Activated CD4-positive, alpha-beta T cell treated with anti-CD3 and anti-CD28 coated beads for 36 hours (primary cell): ENCODE measurements at regions of chr1 and their contacts with region 1.

Region 1: GRCh38 chr1:204363335-204364124 is 3.8 kb upstream of the PLEKHA6 start:
- DNase-seq: peak; percentile 87
- ATAC-seq: peak; percentile 81
- H3K4me3 Mint-ChIP-seq: peak overlapping the region; percentile 60
- H3K27ac Mint-ChIP-seq: peak overlapping the region; percentile 85
- H3K4me1 Mint-ChIP-seq: peaks cover 33% of the 10 kb centered on the region
- H3K27me3 Mint-ChIP-seq: peaks cover 2% of the 10 kb centered on the region

Region 2: DNA sequence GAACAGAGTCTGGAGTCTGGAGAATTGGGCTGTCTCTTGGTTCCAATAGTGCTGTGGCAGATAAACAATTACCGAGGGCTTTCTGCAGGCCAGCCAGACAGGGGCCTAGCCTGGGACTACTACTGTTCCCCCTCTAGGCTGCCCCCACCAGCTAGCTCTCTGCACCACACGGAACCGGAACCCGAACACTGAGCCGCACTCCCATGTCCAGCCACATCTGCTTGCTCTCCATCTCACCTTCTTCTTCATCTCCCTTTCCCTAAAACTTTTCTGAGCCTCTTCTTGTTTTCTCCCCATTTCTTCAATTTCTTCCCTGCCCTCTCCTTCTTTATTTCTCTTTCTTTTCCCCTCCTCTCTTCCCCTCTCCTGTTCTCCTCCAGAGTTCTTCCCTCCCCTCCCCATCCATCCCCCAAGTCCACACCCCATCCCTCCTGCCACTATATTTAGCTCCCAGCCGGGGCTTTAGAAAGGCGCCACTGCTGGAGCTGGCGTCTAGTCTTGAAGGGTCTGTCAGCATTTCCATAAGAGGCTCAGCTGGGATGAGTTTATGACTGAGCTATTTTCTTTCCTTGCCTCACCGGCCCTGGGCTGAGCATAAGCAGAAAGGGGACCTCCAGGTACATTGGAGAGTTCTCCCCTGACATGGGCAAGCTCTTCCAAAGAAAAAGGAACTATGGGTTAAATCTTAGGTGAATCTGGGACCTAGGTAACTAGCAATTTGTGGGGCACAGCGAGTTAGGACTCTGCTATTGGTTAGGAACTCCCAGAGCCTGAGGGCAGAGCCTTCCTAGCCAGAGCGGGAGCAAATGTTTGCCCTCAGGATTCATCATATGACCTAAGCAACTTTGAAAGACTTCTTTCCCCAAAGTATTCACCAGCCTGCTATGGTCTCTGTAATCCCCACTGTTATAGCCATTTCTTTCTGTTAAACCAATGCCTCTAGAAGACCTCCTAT is 762.5 kb before region 1 on chr1:
- CTCF ChIA-PET with region 1: no interaction called
- POLR2A ChIA-PET with region 1: no interaction called
- intact Hi-C with region 1: no loop called
- DNase-seq: no peak
- ATAC-seq: no peak
- H3K4me3 Mint-ChIP-seq: no peak overlapping the region
- H3K27ac Mint-ChIP-seq: peak overlapping the region; percentile 51
- H3K4me1 Mint-ChIP-seq: peaks cover 10% of the 10 kb centered on the region
- H3K27me3 Mint-ChIP-seq: no peaks in the 10 kb centered on the region

Region 3: GRCh38 chr1:204162231-204163074 is 201.1 kb before region 1 on chr1:
- CTCF ChIA-PET with region 1: interaction called, 57 read pairs
- POLR2A ChIA-PET with region 1: no interaction called
- intact Hi-C with region 1: loop called (anchors 1 kb)
- DNase-seq: peak; percentile 88
- ATAC-seq: peak; percentile 98
- H3K4me3 Mint-ChIP-seq: no peak overlapping the region
- H3K27ac Mint-ChIP-seq: no peak overlapping the region
- H3K4me1 Mint-ChIP-seq: peaks cover 1% of the 10 kb centered on the region
- H3K27me3 Mint-ChIP-seq: peaks cover 7% of the 10 kb centered on the region

Region 4: GRCh38 chr1:204213668-204214662 is 149.6 kb before region 1 on chr1 and contains the start of gene GOLT1A:
- CTCF ChIA-PET with region 1: interaction called, 27 read pairs
- POLR2A ChIA-PET with region 1: interaction called, 4 read pairs
- intact Hi-C with region 1: loop called (anchors 1 kb)
- DNase-seq: peak; percentile 78
- ATAC-seq: peak; percentile 79
- H3K4me3 Mint-ChIP-seq: peak within 1 kb of the TSS; percentile 34
- H3K27ac Mint-ChIP-seq: no peak within 1 kb of the TSS
- H3K4me1 Mint-ChIP-seq: peaks cover 8% of the 10 kb centered on the region
- H3K27me3 Mint-ChIP-seq: peaks cover 4% of the 10 kb centered on the region
- total RNA-seq, gene GOLT1A: 0.21 to 0.69 TPM

Region 5: GRCh38 chr1:204274446-204274845 is 89.1 kb before region 1 on chr1:
- CTCF ChIA-PET with region 1: no interaction called
- POLR2A ChIA-PET with region 1: no interaction called
- intact Hi-C with region 1: no loop called
- DNase-seq: no peak
- ATAC-seq: no peak
- H3K4me3 Mint-ChIP-seq: no peak overlapping the region
- H3K27ac Mint-ChIP-seq: no peak overlapping the region
- H3K4me1 Mint-ChIP-seq: no peaks in the 10 kb centered on the region
- H3K27me3 Mint-ChIP-seq: peaks cover 6% of the 10 kb centered on the region

Region 6: DNA sequence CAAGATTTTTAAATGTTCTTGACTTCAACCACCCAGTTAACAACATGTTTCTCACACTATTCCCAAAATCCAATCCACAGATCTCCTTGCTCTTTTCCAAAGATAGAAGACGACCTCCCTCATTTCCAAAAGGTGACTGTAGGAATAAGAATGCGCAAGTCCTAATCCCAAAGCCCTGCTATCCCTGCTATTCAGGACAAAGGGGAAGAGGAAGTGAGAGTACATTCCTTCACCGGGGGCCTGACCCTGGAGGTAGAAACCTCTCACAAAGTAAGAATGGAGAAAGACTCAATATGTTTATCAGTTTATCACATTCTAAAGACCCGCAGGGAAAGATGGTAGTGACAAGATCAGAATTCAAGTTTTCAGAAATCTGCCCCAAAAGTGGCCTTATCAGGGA is 59.5 kb before region 1 on chr1:
- CTCF ChIA-PET with region 1: interaction called, 4 read pairs
- POLR2A ChIA-PET with region 1: no interaction called
- intact Hi-C with region 1: loop called in 1 of 2 experiments (anchors 5 kb)
- DNase-seq: no peak
- ATAC-seq: no peak
- H3K4me3 Mint-ChIP-seq: no peak overlapping the region
- H3K27ac Mint-ChIP-seq: no peak overlapping the region
- H3K4me1 Mint-ChIP-seq: no peaks in the 10 kb centered on the region
- H3K27me3 Mint-ChIP-seq: peaks cover 3% of the 10 kb centered on the region

Region 7: GRCh38 chr1:204377795-204378608 is 14.5 kb after region 1 on chr1:
- CTCF ChIA-PET with region 1: interaction called, 17 read pairs
- POLR2A ChIA-PET with region 1: no interaction called
- intact Hi-C with region 1: no loop called
- DNase-seq: peak; percentile 67
- ATAC-seq: peak; percentile 71
- H3K4me3 Mint-ChIP-seq: peak overlapping the region; percentile 66
- H3K27ac Mint-ChIP-seq: no peak overlapping the region
- H3K4me1 Mint-ChIP-seq: peaks cover 10% of the 10 kb centered on the region
- H3K27me3 Mint-ChIP-seq: peaks cover 15% of the 10 kb centered on the region

Region 8: DNA sequence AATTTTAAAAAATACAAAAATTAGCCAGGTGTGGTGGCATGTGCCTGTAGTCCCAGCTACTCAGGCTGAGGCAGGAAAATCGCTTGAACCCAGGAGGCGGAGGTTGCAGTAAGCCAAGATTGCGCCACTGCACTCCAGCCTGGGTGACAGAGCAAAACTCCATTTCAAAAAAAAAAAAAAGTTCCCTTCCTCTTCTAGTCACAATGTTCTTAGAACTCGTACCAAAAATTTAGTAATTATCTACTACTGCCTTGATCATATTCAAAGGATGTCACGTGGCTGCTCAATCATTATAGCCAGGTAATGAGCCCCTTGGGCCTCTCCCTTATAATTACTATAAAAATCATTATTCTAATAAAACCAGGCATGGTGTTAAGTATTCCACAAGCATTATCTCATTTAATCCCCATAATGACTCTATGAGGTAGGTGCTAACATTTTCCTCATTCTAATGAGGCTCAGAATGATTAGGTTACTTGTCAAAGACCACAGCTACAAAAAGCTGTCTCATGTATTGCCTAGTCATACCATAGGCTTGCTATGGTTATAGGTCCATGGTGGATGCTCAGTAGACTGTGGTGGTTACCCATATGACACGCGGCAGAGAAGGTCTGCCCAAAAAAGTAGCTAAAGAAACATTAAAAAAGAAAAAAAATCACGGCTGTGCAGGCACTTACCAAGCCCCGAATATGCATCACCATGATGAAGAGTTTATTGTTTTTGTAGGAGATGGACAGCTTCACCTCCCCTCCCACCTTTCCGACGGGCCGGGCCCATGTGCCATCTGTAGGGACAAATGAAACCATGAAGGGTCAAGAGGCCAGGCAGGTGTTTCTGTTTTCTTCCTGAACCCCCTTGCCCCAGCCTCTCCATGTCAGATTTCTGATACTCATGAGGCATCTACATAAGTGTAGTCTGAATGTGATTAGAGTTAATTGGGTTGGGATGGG is 63.7 kb after region 1 on chr1:
- CTCF ChIA-PET with region 1: no interaction called
- POLR2A ChIA-PET with region 1: no interaction called
- intact Hi-C with region 1: no loop called
- DNase-seq: no peak
- ATAC-seq: peak; percentile 33
- H3K4me3 Mint-ChIP-seq: no peak overlapping the region
- H3K27ac Mint-ChIP-seq: no peak overlapping the region
- H3K4me1 Mint-ChIP-seq: peaks cover 8% of the 10 kb centered on the region
- H3K27me3 Mint-ChIP-seq: no peaks in the 10 kb centered on the region